ENCODE measurements at regions of chr12 and their contacts with region 1.

Region 1: GRCh38 chr12:53625946-53626701 is at the start of gene ATF7:
- DNase-seq: peak; percentile 99
- H3K4me3 Mint-ChIP-seq: peak within 1 kb of the TSS; percentile 97
- H3K27ac Mint-ChIP-seq: peak within 1 kb of the TSS; percentile 94
- H3K4me1 Mint-ChIP-seq: peaks cover 43% of the 10 kb centered on the region
- H3K27me3 Mint-ChIP-seq: no peaks in the 10 kb centered on the region
- total RNA-seq, gene ATF7: 19.3 to 20.7 TPM

Region 2: DNA sequence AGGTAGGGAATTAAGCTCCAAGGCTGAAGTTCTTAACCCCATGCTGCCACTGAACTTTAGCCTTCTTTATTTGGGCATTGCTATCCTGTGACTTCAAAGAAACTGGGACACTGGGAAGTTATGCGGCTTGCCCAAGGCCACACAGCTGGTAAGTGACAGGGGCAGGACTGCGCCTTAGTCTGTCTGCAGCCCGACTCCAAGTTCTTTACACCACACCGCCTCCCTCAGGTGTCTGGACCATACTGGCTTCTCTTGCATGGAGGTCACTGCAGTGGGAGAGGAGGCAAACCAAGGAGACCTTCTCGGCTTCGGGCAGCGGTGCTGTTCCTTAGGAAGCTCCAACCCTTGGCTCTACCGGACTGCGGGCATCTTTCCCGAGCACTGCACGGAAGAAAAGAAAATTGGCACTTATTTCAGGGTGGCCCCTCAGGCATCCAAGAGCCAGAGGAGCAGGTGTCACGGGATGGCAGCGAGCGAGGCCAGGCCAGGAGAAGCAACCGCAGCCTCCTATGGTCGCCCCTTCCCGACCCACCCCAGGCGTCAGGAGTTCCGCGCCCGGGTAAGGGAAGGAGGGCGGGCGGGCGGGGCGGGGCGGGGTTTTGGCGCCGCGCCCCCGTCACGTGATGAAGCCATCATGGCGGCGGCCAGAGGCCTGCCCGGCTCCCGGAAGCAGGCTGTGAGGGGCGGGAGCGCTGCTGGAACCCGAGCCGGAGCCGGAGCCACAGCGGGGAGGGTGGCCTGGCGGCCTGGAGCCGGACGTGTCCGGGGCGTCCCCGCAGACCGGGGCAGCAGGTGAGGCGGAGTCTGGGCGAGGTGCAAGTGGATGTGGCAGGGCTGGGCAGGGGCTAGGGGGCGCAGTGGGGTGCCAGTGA is 374.4 kb before region 1 on chr12:
- CTCF ChIA-PET with region 1: no interaction called
- POLR2A ChIA-PET with region 1: no interaction called
- intact Hi-C with region 1: no loop called
- DNase-seq: peak; percentile 79
- H3K4me3 Mint-ChIP-seq: peak overlapping the region; percentile 97
- H3K27ac Mint-ChIP-seq: peak overlapping the region; percentile 89
- H3K4me1 Mint-ChIP-seq: peaks cover 40% of the 10 kb centered on the region
- H3K27me3 Mint-ChIP-seq: no peaks in the 10 kb centered on the region

Region 3: GRCh38 chr12:53643232-53643979 is 17.3 kb after region 1 on chr12:
- CTCF ChIA-PET with region 1: no interaction called
- POLR2A ChIA-PET with region 1: no interaction called
- intact Hi-C with region 1: no loop called
- DNase-seq: no peak
- H3K4me3 Mint-ChIP-seq: no peak overlapping the region
- H3K27ac Mint-ChIP-seq: no peak overlapping the region
- H3K4me1 Mint-ChIP-seq: no peaks in the 10 kb centered on the region
- H3K27me3 Mint-ChIP-seq: no peaks in the 10 kb centered on the region

Region 4: GRCh38 chr12:53657041-53657440 is 30.9 kb after region 1 on chr12:
- CTCF ChIA-PET with region 1: no interaction called
- POLR2A ChIA-PET with region 1: no interaction called
- intact Hi-C with region 1: no loop called
- DNase-seq: no peak
- H3K4me3 Mint-ChIP-seq: no peak overlapping the region
- H3K27ac Mint-ChIP-seq: no peak overlapping the region
- H3K4me1 Mint-ChIP-seq: no peaks in the 10 kb centered on the region
- H3K27me3 Mint-ChIP-seq: no peaks in the 10 kb centered on the region

Region 5: GRCh38 chr12:53727310-53728041 is 101.4 kb after region 1 on chr12 and contains the start of gene CALCOCO1:
- CTCF ChIA-PET with region 1: no interaction called
- POLR2A ChIA-PET with region 1: no interaction called
- intact Hi-C with region 1: loop called (anchors 1 kb)
- DNase-seq: peak; percentile 99
- H3K4me3 Mint-ChIP-seq: peak within 1 kb of the TSS; percentile 87
- H3K27ac Mint-ChIP-seq: peak within 1 kb of the TSS; percentile 77
- H3K4me1 Mint-ChIP-seq: peaks cover 19% of the 10 kb centered on the region
- H3K27me3 Mint-ChIP-seq: no peaks in the 10 kb centered on the region
- total RNA-seq, gene CALCOCO1: 21.2 to 23.7 TPM

Measured in activated CD4-positive, alpha-beta memory T cell treated with anti-CD3 and anti-CD28 coated beads for 36 hours (primary cell).